ENCODE measurements at regions of chr12 and their contacts with region 1.

Region 1: DNA sequence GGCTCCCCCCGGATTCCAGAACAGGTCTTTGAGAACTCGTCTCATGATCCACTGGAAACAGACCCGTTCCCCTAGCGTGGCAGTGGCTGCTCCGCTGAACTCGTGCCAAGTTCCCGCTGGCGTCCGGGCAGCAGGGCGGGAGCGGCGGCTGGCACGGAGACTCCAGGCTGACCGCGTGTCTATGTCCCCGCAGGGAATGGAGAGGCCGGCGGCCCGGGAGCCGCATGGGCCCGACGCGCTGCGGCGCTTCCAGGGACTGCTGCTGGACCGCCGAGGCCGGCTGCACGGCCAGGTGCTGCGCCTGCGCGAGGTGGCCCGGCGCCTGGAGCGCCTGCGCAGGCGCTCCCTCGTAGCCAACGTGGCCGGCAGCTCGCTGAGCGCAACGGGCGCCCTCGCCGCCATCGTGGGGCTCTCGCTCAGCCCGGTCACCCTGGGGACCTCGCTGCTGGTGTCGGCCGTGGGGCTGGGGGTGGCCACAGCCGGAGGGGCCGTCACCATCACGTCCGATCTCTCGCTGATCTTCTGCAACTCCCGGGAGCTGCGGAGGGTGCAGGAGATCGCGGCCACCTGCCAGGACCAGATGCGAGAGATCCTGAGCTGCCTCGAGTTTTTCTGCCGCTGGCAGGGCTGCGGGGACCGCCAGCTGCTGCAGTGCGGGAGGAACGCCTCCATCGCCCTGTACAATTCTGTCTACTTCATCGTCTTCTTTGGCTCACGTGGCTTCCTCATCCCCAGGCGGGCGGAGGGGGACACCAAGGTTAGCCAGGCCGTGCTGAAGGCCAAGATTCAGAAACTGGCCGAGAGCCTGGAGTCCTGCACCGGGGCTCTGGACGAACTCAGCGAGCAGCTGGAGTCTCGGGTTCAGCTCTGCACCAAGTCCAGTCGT is 1.5 kb downstream of the APOLD1 start:
- DNase-seq: peak; percentile 84 to 94 (median 92)
- ATAC-seq: peak; percentile 81 to 95
- H3K4me3 ChIP-seq: peak overlapping the region; percentile 58
- H3K27ac ChIP-seq: peak overlapping the region; percentile 87
- H3K4me1 ChIP-seq: peaks cover 9% of the 10 kb centered on the region
- H3K27me3 ChIP-seq: no peaks in the 10 kb centered on the region

Region 2: DNA sequence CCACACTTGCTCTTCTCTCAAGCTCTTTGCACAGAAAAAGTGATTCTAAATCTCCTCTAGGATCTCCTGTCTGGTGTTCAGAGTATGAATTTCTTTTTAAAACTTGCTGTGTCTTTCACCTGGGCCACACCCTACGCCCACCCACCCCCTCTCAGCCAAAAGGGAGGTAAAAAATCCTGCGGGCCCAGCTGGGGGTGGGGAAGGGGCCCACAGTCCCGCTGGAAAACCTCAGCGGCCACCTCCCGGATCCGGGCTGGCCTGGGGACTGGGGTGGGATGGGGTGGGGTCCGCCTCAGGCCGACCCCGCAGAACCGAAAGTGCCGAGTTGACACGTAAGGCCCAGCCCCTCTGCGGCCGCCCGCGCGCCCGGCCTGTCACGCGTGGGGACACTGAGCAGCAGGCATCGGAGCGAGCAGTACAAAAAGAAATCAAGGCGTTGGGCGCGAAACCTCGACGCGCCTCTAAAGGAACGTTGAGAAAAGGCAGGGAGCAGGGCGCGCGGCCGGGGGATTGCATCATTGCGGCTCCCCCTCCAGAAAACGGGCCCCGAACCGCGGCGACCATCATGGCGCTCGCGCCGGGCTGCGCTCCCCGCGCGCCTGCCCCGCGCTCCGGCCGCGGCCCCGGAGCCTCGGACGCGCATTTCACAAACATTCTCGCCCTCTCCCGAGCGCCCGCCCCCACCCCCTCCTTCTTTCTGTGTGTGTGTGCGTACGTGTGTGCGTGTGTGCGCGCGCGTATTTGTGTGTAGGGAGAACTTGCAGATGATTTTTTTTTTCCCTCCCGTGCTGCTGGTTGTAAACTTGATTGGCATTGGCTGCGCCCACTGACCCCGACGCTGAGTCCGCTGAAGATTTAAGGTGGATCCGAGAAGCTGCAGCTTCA is 62.1 kb before region 1 on chr12:
- intact Hi-C with region 1: loop called in 1 of 4 experiments (anchors 10 kb)
- DNase-seq: peak; percentile 92 to 98 (median 96)
- ATAC-seq: peak; percentile 86 to 92
- H3K4me3 ChIP-seq: peak overlapping the region; percentile 52
- H3K27ac ChIP-seq: peak overlapping the region; percentile 85
- H3K4me1 ChIP-seq: peaks cover 2% of the 10 kb centered on the region
- H3K27me3 ChIP-seq: no peaks in the 10 kb centered on the region

Measured in right cardiac atrium (tissue), 5 donors.